Right cardiac atrium (tissue), 5 donors: ENCODE measurements at regions of chr2 and their contacts with region 1.

Region 1: GRCh38 chr2:215269397-215270119 is 42.3 kb upstream of the ATIC start:
- DNase-seq: peak; percentile 35 to 77 (median 46)
- ATAC-seq: peak in 1 of 2 donors; percentile 72
- H3K4me3 ChIP-seq: no peak overlapping the region
- H3K27ac ChIP-seq: no peak overlapping the region
- H3K4me1 ChIP-seq: no peaks in the 10 kb centered on the region
- H3K27me3 ChIP-seq: no peaks in the 10 kb centered on the region

Region 2: DNA sequence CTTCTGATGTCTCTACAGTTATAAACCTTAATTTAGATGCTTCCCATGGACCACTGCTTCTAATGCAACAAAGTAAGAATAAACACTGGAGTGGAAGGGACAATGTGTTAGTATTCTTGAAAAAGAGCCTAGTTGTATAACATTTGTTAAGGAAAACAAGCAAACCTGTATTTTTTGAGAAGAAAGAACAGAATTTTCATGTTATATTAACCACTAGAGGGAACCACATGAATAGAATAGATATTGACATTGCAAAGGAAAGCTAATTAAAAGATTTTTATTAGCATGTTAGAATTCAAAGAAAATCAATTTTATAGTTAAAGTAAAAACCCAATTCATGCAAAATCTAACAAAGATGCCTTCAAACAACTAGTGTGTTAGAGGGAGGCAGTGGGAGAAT is 308.9 kb before region 1 on chr2:
- intact Hi-C with region 1: loop called in 1 of 4 experiments (anchors 10 kb)
- DNase-seq: no peak
- ATAC-seq: no peak
- H3K4me3 ChIP-seq: no peak overlapping the region
- H3K27ac ChIP-seq: no peak overlapping the region
- H3K4me1 ChIP-seq: no peaks in the 10 kb centered on the region
- H3K27me3 ChIP-seq: no peaks in the 10 kb centered on the region